ENCODE measurements at regions of chr20 and their contacts with region 1.

Region 1: GRCh38 chr20:50987592-50988210 is 29.1 kb downstream of the MOCS3 start:
- DNase-seq: peak; percentile 77
- ATAC-seq: peak; percentile 85
- H3K4me3 Mint-ChIP-seq: no peak overlapping the region
- H3K27ac Mint-ChIP-seq: no peak overlapping the region
- H3K4me1 Mint-ChIP-seq: no peaks in the 10 kb centered on the region
- H3K27me3 Mint-ChIP-seq: peaks cover 13% of the 10 kb centered on the region

Region 2: DNA sequence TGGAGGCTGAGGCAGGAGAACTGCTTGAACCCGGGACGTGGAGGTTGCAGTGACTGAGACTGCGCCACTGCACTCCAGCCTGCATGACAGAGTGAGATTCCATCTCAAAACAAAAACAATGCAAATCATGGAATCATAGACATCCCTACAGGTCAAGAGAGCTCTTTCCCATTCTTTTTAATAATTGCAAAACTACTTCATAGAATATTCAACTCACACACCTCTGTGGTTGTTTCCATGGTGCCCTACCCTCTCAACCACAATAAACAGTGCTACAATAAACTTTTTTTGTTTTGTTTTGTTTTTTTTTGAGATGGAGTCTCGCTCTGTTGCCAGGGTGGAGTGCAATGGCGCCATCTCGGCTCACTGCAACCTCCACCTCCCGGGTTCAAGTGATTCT is 44.6 kb before region 1 on chr20:
- CTCF ChIA-PET with region 1: no interaction called
- POLR2A ChIA-PET with region 1: no interaction called
- DNase-seq: no peak
- ATAC-seq: peak; percentile 62
- H3K4me3 Mint-ChIP-seq: no peak overlapping the region
- H3K27ac Mint-ChIP-seq: no peak overlapping the region
- H3K4me1 Mint-ChIP-seq: no peaks in the 10 kb centered on the region
- H3K27me3 Mint-ChIP-seq: no peaks in the 10 kb centered on the region

Region 3: DNA sequence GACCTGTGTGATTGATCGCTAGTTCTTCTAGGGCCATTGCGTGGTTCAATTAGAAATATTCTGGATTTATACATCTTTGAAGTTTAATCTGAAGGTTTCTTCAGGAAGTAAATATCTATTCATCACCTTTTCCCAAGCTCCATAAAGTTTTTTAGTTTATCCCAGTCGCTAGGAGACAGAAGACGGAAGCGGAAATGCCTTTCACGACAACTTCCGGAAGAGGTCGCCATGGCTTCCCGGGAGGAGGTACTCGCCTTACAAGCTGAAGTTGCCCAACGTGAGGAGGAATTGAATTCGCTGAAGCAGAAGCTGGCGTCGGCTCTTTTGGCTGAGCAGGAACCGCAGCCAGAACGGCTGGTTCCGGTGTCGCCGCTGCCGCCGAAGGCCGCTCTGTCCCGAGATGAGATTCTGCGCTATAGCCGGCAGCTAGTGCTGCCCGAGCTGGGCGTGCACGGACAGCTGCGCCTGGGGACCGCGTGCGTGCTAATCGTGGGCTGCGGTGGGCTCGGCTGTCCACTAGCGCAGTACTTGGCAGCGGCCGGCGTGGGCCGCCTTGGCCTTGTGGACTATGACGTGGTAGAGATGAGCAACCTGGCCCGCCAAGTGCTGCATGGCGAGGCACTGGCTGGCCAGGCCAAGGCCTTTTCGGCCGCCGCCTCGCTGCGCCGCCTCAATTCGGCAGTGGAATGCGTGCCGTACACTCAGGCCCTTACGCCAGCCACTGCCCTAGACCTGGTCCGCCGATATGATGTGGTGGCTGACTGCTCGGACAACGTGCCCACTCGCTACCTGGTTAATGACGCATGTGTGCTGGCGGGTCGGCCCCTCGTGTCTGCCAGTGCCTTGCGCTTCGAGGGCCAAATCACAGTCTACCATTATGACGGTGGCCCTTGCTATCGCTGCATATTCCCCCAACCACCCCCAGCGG is 28.8 kb before region 1 on chr20 and contains the start of gene MOCS3:
- CTCF ChIA-PET with region 1: interaction called, 15 read pairs
- POLR2A ChIA-PET with region 1: interaction called, 4 read pairs
- DNase-seq: peak; percentile 91
- ATAC-seq: peak; percentile 75
- H3K4me3 Mint-ChIP-seq: peak within 1 kb of the TSS; percentile 93
- H3K27ac Mint-ChIP-seq: peak within 1 kb of the TSS; percentile 99
- H3K4me1 Mint-ChIP-seq: peaks cover 44% of the 10 kb centered on the region
- H3K27me3 Mint-ChIP-seq: no peaks in the 10 kb centered on the region
- total RNA-seq, gene MOCS3: 4.8 to 5.7 TPM

Region 4: GRCh38 chr20:50975701-50976330 is 11.9 kb before region 1 on chr20:
- CTCF ChIA-PET with region 1: interaction called, 37 read pairs
- POLR2A ChIA-PET with region 1: no interaction called
- DNase-seq: no peak
- ATAC-seq: no peak
- H3K4me3 Mint-ChIP-seq: no peak overlapping the region
- H3K27ac Mint-ChIP-seq: no peak overlapping the region
- H3K4me1 Mint-ChIP-seq: no peaks in the 10 kb centered on the region
- H3K27me3 Mint-ChIP-seq: peaks cover 11% of the 10 kb centered on the region

Region 5: DNA sequence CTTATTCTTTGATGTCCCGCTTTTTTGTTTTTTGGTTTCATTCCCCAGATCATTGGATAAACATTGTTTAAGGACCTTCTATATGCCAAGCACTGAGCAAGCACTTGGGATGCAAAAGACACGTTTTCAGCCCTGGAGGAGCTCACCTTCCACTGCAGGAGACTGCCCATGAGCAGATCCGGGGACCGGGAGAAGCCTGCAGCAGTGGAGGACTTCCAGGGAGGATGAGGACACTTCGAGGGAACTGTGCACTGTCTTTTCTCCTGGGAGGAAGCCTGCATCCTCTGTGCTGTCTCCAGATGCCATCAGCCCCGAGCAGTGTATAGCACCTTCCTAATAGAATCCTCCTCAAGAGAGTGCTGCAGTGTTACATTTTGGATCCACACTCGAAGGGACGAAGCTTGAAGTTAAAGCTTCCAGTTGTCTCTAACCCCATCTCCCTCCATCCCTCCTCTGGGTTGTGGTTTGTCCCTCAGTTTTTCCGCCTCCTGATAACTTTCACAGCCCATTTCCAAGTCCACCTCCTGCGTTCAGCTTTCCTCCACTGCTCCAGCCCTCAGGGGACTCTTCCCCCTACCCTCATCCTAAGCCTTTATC is 41.0 kb after region 1 on chr20:
- CTCF ChIA-PET with region 1: no interaction called
- POLR2A ChIA-PET with region 1: no interaction called
- DNase-seq: no peak
- ATAC-seq: no peak
- H3K4me3 Mint-ChIP-seq: no peak overlapping the region
- H3K27ac Mint-ChIP-seq: no peak overlapping the region
- H3K4me1 Mint-ChIP-seq: peaks cover 2% of the 10 kb centered on the region
- H3K27me3 Mint-ChIP-seq: peaks cover 63% of the 10 kb centered on the region

Region 6: DNA sequence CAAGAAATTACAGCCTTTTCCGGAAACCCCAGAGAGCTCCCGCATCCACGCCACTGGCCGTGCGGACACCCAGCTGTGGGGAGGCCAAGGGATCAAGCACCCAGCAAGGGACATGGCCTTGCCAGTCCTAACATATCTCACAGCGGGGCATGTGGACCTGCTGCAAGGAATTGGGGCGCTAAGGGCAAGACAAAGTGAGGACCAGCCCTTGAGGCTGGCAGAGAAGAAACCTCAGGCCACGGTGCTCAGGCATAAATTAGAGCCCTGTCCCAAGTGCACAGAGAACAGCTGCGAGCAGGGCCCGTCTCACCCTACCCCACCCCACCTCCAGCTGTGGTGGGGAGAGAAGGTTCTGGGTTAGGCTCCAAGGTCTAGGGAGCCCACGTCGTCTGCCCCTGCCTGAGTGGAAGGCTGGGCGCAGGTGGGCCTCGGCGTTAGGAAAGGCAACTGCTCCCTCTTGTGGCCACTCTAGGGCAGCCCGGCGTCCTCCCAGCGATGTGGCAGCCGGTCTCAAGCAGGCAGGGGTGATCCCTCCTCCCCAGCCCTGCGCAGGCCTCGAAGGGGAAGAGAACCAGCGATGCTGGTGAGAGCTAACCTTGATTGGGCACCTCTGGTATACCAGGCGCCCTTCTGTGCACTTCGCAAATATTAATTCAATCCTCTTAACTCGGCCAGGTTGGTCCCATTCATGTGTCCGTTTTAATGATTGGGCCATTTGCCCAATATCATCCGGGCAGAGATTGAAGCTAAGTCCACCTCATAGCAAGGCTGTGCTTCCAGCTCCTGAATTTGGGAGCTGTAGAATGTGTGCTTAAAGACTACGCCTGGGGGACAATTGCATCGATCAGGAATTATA is 319.0 kb after region 1 on chr20:
- CTCF ChIA-PET with region 1: interaction called, 87 read pairs
- POLR2A ChIA-PET with region 1: no interaction called
- DNase-seq: peak; percentile 77
- ATAC-seq: peak; percentile 99
- H3K4me3 Mint-ChIP-seq: no peak overlapping the region
- H3K27ac Mint-ChIP-seq: no peak overlapping the region
- H3K4me1 Mint-ChIP-seq: peaks cover 3% of the 10 kb centered on the region
- H3K27me3 Mint-ChIP-seq: peaks cover 16% of the 10 kb centered on the region

Region 7: GRCh38 chr20:51318058-51318895 is 330.6 kb after region 1 on chr20:
- CTCF ChIA-PET with region 1: interaction called, 10 read pairs
- POLR2A ChIA-PET with region 1: no interaction called
- DNase-seq: peak; percentile 42
- ATAC-seq: no peak
- H3K4me3 Mint-ChIP-seq: no peak overlapping the region
- H3K27ac Mint-ChIP-seq: no peak overlapping the region
- H3K4me1 Mint-ChIP-seq: no peaks in the 10 kb centered on the region
- H3K27me3 Mint-ChIP-seq: no peaks in the 10 kb centered on the region

Region 8: GRCh38 chr20:51326201-51326819 is 338.6 kb after region 1 on chr20:
- CTCF ChIA-PET with region 1: interaction called, 18 read pairs
- POLR2A ChIA-PET with region 1: no interaction called
- DNase-seq: no peak
- ATAC-seq: no peak
- H3K4me3 Mint-ChIP-seq: no peak overlapping the region
- H3K27ac Mint-ChIP-seq: no peak overlapping the region
- H3K4me1 Mint-ChIP-seq: no peaks in the 10 kb centered on the region
- H3K27me3 Mint-ChIP-seq: peaks cover 2% of the 10 kb centered on the region